Calu3 (cell line): ENCODE measurements at regions of chr6 and their contacts with region 1.

Region 1: GRCh38 chr6:87832025-87832825 is 130.2 kb upstream of the AKIRIN2 start:
- DNase-seq: no peak
- H3K4me3 Mint-ChIP-seq: peak overlapping the region; percentile 39
- H3K27ac Mint-ChIP-seq: peak overlapping the region; percentile 35
- H3K4me1 Mint-ChIP-seq: peaks cover 8% of the 10 kb centered on the region
- H3K27me3 Mint-ChIP-seq: no peaks in the 10 kb centered on the region
- CTCF ChIP-seq: no peak

Region 2: GRCh38 chr6:87623248-87623647 is 209.0 kb before region 1 on chr6:
- CTCF ChIA-PET with region 1: no interaction called
- intact Hi-C with region 1: no loop called
- DNase-seq: no peak
- H3K4me3 Mint-ChIP-seq: no peak overlapping the region
- H3K27ac Mint-ChIP-seq: no peak overlapping the region
- H3K4me1 Mint-ChIP-seq: no peaks in the 10 kb centered on the region
- H3K27me3 Mint-ChIP-seq: no peaks in the 10 kb centered on the region
- CTCF ChIP-seq: no peak

Region 3: DNA sequence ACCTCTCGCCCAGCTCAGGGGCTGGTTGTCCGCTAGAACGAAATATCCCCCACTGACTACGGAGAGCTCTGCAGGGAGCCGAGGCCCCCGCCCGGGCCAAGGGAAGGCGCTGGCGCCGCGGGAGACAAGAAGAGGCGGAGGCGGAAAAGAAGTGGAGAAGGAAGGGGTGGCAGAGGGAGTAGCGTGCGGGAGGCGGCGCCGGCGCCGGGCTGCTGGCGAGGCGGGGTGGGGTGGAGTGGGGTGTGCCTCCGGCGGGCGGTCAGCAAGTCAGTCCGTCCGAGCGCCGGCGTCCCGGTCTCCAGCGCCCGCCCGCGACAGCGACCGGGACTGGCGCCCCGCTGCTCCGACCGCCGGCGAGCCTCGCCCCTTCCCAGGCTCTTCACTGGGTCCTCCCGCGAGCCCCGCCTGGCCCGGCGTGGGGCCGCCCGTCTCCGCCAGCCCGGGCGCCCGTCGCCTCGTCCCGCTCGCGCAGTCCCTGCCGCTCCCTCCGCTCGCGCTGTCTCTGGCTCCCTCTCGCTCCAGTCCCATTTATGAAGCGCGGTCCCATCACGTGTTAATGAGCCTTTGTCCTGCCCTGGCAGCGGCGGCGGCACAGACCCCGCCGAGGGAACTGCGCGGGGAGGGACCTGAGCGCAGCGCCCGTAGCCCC is 333.7 kb after region 1 on chr6 and contains the start of gene CNR1:
- CTCF ChIA-PET with region 1: no interaction called
- intact Hi-C with region 1: loop called (anchors 5 kb)
- DNase-seq: peak; percentile 64
- H3K4me3 Mint-ChIP-seq: peak within 1 kb of the TSS; percentile 78
- H3K27ac Mint-ChIP-seq: no peak within 1 kb of the TSS
- H3K4me1 Mint-ChIP-seq: no peaks in the 10 kb centered on the region
- H3K27me3 Mint-ChIP-seq: peaks cover 69% of the 10 kb centered on the region
- CTCF ChIP-seq: no peak
- total RNA-seq, gene CNR1: 0.31 and 0.69 TPM in 2 replicates

Region 4: DNA sequence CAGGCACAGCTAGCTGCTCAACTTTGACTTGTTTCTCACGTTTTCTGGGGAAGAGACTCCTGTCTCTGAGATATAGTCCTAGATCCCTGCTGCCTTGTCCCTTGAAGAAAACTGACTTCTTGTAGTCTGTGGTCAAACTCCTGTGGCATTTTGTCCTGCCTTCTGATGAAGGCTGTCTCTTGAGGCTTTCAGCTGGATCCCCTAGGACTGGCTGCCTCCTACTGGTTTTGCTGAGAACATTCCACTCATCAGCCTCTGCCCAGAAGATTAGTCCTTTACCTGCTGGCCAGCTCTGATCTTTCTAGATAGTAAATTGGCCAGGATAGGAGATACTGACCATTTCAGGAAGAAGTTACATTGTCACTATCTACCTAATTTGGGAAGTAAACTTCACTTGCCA is 405.8 kb after region 1 on chr6:
- CTCF ChIA-PET with region 1: no interaction called
- intact Hi-C with region 1: loop called (anchors 2 kb)
- DNase-seq: peak; percentile 38
- H3K4me3 Mint-ChIP-seq: no peak overlapping the region
- H3K27ac Mint-ChIP-seq: no peak overlapping the region
- H3K4me1 Mint-ChIP-seq: no peaks in the 10 kb centered on the region
- H3K27me3 Mint-ChIP-seq: no peaks in the 10 kb centered on the region
- CTCF ChIP-seq: no peak

Region 5: DNA sequence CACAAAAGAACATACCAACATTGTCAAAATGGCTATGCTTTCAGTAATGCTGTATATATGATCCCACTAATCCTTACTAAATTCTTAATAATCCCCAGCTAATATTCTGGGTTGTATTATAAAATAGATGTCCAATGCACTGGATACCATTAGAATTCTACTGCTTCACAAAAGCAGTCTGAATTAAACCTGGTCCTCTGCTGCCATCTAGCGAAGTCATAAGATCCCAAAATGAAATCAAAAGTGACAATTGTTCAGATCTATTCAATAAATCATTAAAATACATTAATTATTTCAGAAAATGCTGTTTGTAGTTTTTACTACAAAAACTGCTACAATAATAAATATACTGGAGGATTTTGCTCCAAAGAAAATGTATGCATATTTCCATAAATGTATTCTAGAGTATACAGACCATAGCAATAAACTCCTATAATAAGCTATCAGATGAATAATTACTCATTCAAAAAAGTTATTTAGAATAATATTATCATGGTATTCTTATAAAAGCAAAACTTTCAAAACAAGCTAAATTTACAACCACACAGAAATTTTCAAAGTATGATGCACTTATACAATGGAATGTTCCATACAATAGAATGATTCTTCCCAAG is 1038.6 kb after region 1 on chr6:
- CTCF ChIA-PET with region 1: no interaction called
- intact Hi-C with region 1: loop called (anchors 5 kb)
- DNase-seq: peak; percentile 56
- H3K4me3 Mint-ChIP-seq: no peak overlapping the region
- H3K27ac Mint-ChIP-seq: no peak overlapping the region
- H3K4me1 Mint-ChIP-seq: peaks cover 14% of the 10 kb centered on the region
- H3K27me3 Mint-ChIP-seq: no peaks in the 10 kb centered on the region
- CTCF ChIP-seq: no peak